ENCODE measurements at regions of chr1 and their contacts with region 1.

Region 1: DNA sequence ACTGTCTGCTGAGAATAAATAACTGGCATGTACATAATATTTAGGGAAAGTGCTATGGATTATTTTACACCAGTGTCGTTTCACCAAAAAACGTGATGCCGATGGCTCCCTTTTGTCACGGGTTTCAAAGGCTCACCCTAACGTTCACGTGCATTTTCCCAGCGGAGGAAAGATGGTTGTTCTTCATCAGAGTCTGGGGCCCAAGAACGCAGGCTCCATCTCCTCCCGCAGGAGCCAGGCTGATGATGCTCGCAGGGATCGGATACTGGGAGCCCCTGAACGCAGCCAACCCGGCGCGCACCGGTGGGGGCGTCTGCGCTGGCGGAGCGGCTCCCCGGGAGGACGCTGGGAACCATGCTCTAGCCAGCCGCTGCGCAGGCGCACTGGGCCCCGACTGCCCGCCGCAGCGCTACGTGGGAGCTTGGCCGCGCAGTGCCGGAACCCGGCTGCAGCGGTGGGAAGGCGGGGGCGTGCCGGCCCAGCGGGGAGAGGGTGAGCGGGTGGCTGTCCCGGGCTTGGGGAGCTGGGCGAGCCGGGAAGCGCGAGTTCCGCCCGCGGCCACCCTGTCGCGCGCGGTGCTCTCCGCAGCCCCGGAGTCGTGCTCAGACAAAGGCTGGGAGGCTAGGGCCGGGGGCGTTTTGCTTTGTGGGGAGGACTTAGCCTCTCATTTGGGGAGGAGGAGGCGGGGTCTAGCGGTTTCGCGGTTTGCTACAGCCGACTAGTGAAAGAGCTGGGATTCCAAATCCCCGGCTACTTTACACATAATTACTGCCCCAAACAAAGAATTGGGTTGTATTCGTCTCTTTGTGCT is at the start of gene ZFP69B:
- DNase-seq: peak; percentile 89
- H3K4me3 ChIP-seq: peak within 1 kb of the TSS; percentile 54 to 91 (median 60)
- H3K27ac ChIP-seq: peak within 1 kb of the TSS; percentile 65
- H3K4me1 ChIP-seq: peaks cover 23% of the 10 kb centered on the region
- H3K27me3 ChIP-seq: no peaks in the 10 kb centered on the region
- CTCF ChIP-seq: no peak
- total RNA-seq, gene ZFP69B: 6.7 to 10.1 TPM

Region 2: GRCh38 chr1:40404670-40405462 is 45.0 kb before region 1 on chr1:
- CTCF ChIA-PET with region 1: no interaction called
- dilution Hi-C with region 1: no loop called
- in situ Hi-C with region 1: no loop called
- intact Hi-C with region 1: no loop called
- DNase-seq: peak; percentile 30
- H3K4me3 ChIP-seq: no peak overlapping the region
- H3K27ac ChIP-seq: no peak overlapping the region
- H3K4me1 ChIP-seq: no peaks in the 10 kb centered on the region
- H3K27me3 ChIP-seq: no peaks in the 10 kb centered on the region
- CTCF ChIP-seq: peak; percentile 72 to 79

Region 3: GRCh38 chr1:40508375-40509341 is 58.8 kb after region 1 on chr1 and contains the start of gene EXO5:
- CTCF ChIA-PET with region 1: no interaction called
- dilution Hi-C with region 1: no loop called
- in situ Hi-C with region 1: no loop called
- intact Hi-C with region 1: loop called (anchors 2 kb)
- DNase-seq: peak; percentile 73
- H3K4me3 ChIP-seq: peak within 1 kb of the TSS; percentile 45 to 62 (median 55)
- H3K27ac ChIP-seq: peak within 1 kb of the TSS; percentile 24
- H3K4me1 ChIP-seq: peaks cover 3% of the 10 kb centered on the region
- H3K27me3 ChIP-seq: no peaks in the 10 kb centered on the region
- CTCF ChIP-seq: no peak
- total RNA-seq, gene EXO5: 7.2 to 14.7 TPM

Region 4: DNA sequence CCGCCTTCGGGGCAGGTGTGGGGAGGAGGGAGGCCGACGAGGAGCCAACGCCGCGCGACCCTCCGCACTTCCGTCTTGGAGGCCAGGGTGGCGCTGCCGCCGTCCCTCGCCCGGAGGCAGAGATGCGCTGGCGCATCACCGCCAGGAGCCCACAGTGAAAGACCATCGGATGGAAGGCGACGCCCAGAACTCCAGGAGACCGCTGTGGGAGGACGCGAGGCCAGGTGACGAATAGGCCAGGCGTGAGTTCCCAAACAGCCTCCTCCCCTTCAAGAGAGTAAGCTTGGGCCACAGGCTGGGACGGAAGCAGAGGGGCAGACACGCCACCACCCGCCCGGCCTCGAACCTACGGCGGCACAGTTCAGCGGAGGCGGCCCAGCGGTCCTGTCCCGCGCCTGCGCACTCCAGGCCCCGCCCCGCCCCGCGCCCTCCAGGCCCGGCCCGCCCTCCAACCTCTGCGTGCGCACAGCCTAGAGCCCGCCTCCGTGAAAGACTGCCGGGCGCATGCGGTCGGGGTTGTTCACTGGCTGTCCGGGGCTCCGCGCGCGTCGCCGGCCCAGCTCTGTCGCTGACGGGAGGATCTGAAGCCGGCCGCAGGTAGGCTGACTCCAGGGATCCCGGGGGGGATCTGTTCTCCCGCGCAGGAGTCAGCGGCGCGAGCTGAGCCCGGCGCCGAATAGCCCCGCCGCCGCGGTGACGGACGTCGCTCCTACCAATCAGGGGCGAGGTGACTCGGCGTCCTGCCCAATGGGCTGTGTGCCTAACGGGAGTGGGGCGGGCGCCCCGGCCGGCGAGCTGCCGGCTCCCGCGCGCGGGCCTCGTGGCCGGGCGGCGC is 529.6 kb after region 1 on chr1 and contains the start of gene CTPS1:
- CTCF ChIA-PET with region 1: no interaction called
- dilution Hi-C with region 1: no loop called
- in situ Hi-C with region 1: no loop called
- intact Hi-C with region 1: no loop called
- DNase-seq: peak; percentile 93
- H3K4me3 ChIP-seq: peak within 1 kb of the TSS; percentile 80 to 96 (median 89)
- H3K27ac ChIP-seq: peak within 1 kb of the TSS; percentile 79
- H3K4me1 ChIP-seq: peaks cover 33% of the 10 kb centered on the region
- H3K27me3 ChIP-seq: no peaks in the 10 kb centered on the region
- CTCF ChIP-seq: no peak
- total RNA-seq, gene CTPS1: 24.0 to 80.2 TPM

Measured in mammary epithelial cell (primary cell).